ENCODE measurements at regions of chr17 and their contacts with region 1.

Region 1: GRCh38 chr17:39730095-39730921 is at the start of gene MIEN1:
- DNase-seq: peak; percentile 91 to 95
- ATAC-seq: peak; percentile 82 to 90
- H3K4me3 ChIP-seq: peak within 1 kb of the TSS; percentile 60
- H3K27ac ChIP-seq: peak within 1 kb of the TSS; percentile 93 to 94
- H3K4me1 ChIP-seq: peaks cover 6% of the 10 kb centered on the region
- CTCF ChIP-seq: peak; percentile 96
- EP300 ChIP-seq: no peak
- POLR2A ChIP-seq: peak; percentile 78
- RAD21 ChIP-seq: peak; percentile 61 to 86
- polyA plus RNA-seq, gene MIEN1: 63.9 and 111 TPM in 2 replicates

Region 2: DNA sequence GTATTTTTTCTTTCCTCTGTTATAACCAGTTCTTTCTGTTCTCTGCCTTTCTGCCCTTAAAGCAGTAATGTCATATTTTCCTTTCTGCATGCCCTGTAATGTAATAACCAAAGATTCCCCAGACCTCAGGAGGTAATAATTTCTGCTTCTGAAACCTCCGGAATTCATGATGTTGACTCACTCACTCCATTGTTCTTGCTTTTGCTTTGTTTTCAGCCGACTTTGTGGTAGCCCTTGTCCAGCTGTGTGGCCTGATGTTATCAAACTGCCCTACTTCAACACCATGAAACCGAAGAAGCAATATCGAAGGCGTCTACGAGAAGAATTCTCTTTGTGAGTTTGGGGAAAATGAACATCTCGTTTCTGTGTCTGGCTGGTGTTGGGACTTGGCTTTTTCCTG is 213.1 kb before region 1 on chr17:
- CTCF ChIA-PET with region 1: no interaction called
- POLR2A ChIA-PET with region 1: no interaction called
- DNase-seq: no peak
- ATAC-seq: no peak
- H3K4me3 ChIP-seq: no peak overlapping the region
- H3K27ac ChIP-seq: no peak overlapping the region
- H3K4me1 ChIP-seq: no peaks in the 10 kb centered on the region
- CTCF ChIP-seq: no peak
- EP300 ChIP-seq: no peak
- POLR2A ChIP-seq: no peak
- RAD21 ChIP-seq: no peak

Region 3: DNA sequence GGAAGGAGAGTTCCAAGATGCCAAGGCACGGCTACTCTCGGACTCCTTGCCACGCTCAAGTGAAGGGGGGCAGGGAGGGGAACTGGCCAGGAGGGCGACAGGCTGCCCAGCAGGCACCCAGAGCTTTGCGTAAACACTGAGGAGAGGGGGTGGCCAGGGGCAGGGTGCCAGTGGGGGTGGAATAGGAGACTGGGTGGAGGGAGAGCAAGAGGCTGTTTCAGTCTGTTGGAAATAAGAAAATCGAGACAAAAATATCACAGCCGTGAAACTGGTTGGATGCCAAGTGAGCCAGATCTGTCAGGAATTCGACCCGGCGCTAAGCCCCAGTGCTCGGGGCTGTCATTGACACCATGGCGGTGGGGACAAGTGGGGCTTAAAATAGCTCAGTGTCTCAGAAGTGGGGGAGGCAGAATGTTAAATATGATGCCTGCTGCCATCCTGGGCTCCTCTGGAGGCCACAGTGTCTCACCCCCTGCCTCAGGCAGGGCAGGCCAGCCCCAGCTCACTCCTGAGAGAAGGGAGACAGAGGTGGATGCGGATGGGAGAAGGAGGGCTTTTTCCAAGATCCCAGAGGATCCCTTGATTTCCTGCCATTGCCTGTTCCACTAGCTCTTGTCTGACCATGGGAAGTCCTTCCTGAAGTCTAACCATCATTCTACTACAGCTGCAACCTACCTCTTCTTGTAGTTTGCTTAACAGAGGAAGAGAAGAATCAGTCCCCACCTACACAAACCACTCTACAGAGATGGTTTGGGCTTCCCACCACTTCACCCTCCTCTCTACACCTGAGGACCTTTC is 52.6 kb before region 1 on chr17:
- CTCF ChIA-PET with region 1: interaction called, 61 read pairs
- POLR2A ChIA-PET with region 1: interaction called, 3 read pairs
- DNase-seq: no peak
- ATAC-seq: no peak
- H3K4me3 ChIP-seq: no peak overlapping the region
- H3K27ac ChIP-seq: no peak overlapping the region
- H3K4me1 ChIP-seq: peaks cover 21% of the 10 kb centered on the region; the same call in 2 of the 3 replicates
- CTCF ChIP-seq: no peak
- EP300 ChIP-seq: no peak
- POLR2A ChIP-seq: no peak
- RAD21 ChIP-seq: no peak

Region 4: GRCh38 chr17:39699818-39700147 is 30.5 kb before region 1 on chr17 and contains the start of gene ERBB2:
- CTCF ChIA-PET with region 1: interaction called, 34 read pairs
- POLR2A ChIA-PET with region 1: interaction called, 42 read pairs
- DNase-seq: peak; percentile 92 to 93
- ATAC-seq: peak; percentile 71 to 87
- H3K4me3 ChIP-seq: peak within 1 kb of the TSS; percentile 78
- H3K27ac ChIP-seq: peak within 1 kb of the TSS; percentile 79 to 97
- H3K4me1 ChIP-seq: peaks cover 59% of the 10 kb centered on the region
- CTCF ChIP-seq: no peak
- EP300 ChIP-seq: no peak
- POLR2A ChIP-seq: peak; percentile 77
- RAD21 ChIP-seq: no peak
- polyA plus RNA-seq, gene ERBB2: 22.4 and 34.8 TPM in 2 replicates

Region 5: DNA sequence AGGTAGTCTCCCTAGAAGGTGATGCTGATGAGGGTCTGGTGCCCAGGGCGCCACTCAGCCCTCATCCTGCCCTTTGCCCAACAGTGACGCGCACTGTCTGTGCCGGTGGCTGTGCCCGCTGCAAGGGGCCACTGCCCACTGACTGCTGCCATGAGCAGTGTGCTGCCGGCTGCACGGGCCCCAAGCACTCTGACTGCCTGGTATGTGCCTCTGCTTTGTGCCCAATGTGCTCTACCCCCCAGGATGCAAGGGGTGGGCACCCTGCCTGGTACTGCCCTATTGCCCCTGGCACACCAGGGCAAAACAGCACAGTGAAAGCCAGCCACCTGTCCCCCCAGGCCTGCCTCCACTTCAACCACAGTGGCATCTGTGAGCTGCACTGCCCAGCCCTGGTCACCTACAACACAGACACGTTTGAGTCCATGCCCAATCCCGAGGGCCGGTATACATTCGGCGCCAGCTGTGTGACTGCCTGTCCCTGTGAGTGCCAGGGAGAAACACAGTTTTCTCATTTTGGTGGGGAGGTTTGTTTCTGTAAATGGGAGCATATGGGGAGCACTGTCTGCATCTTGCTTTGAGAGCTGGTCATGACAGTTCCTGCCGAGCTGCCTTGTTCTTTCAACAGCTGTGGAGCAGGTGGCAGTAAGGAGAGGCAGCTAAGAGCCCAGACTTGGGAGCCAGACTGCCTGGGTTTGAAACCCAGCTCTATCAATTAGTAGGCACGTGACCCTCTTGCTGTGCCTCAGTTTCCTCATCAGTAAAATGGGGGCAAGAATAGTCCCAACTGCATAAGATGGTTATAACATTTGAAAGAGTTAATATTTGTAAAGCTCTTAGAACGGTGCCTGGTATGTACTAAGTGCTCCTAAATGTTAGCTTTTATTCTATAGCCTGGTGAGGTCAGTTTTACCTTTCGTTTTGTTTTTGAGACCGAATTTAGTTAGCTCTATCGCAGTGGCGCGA is 20.0 kb before region 1 on chr17:
- CTCF ChIA-PET with region 1: interaction called, 46 read pairs
- POLR2A ChIA-PET with region 1: interaction called, 3 read pairs
- DNase-seq: no peak
- ATAC-seq: no peak
- H3K4me3 ChIP-seq: no peak overlapping the region
- H3K27ac ChIP-seq: no peak overlapping the region
- H3K4me1 ChIP-seq: peaks cover 10% of the 10 kb centered on the region
- CTCF ChIP-seq: no peak
- EP300 ChIP-seq: no peak
- POLR2A ChIP-seq: no peak
- RAD21 ChIP-seq: no peak

Region 6: GRCh38 chr17:39754161-39754951 is 24.0 kb after region 1 on chr17:
- CTCF ChIA-PET with region 1: interaction called, 171 read pairs
- POLR2A ChIA-PET with region 1: interaction called, 12 read pairs
- DNase-seq: peak; percentile 85 to 95
- ATAC-seq: peak; percentile 80 to 94
- H3K4me3 ChIP-seq: peak overlapping the region; percentile 69
- H3K27ac ChIP-seq: peak overlapping the region; percentile 83 to 96
- H3K4me1 ChIP-seq: peaks cover 21% of the 10 kb centered on the region
- CTCF ChIP-seq: peak; percentile 99
- EP300 ChIP-seq: no peak
- POLR2A ChIP-seq: peak; percentile 68
- RAD21 ChIP-seq: peak; percentile 92 to 100

Measured in A549 (cell line).